Vagina (tissue), 2 donors: ENCODE measurements at regions of chr21 and their contacts with region 1.

Region 1: DNA sequence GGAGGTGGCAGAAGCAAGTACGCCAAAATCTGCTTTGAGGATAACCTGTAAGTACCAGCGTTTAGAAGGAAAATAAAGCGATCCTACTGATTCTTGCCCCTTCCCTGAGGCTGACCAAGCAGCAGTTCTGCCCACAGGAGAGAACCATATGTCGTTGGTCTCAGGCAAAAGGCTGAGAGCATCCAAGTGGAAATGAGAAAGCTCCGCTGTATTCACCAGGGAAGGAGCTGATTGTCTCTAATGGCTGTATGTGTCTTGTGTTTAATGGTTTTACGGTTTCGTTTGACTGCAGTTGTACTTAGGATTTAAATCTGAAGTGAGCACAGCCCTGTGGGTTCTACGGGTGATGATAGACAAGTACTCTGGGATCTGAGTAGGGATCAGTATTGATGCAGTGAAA is 21.9 kb downstream of the FAM3B start:
- DNase-seq: no peak
- H3K4me3 ChIP-seq: no peak overlapping the region
- H3K27ac ChIP-seq: no peak overlapping the region
- H3K4me1 ChIP-seq: no peaks in the 10 kb centered on the region
- H3K27me3 ChIP-seq: no peaks in the 10 kb centered on the region
- CTCF ChIP-seq: no peak
- POLR2A ChIP-seq: no peak

Region 2: GRCh38 chr21:41043014-41043413 is 295.4 kb before region 1 on chr21:
- intact Hi-C with region 1: loop called (anchors 5 kb)
- DNase-seq: no peak
- H3K4me3 ChIP-seq: no peak overlapping the region
- H3K27ac ChIP-seq: no peak overlapping the region
- H3K4me1 ChIP-seq: no peaks in the 10 kb centered on the region
- H3K27me3 ChIP-seq: no peaks in the 10 kb centered on the region
- CTCF ChIP-seq: no peak
- POLR2A ChIP-seq: no peak